Mammary epithelial cell (primary cell): ENCODE measurements at regions of chr19 and their contacts with region 1.

Region 1: DNA sequence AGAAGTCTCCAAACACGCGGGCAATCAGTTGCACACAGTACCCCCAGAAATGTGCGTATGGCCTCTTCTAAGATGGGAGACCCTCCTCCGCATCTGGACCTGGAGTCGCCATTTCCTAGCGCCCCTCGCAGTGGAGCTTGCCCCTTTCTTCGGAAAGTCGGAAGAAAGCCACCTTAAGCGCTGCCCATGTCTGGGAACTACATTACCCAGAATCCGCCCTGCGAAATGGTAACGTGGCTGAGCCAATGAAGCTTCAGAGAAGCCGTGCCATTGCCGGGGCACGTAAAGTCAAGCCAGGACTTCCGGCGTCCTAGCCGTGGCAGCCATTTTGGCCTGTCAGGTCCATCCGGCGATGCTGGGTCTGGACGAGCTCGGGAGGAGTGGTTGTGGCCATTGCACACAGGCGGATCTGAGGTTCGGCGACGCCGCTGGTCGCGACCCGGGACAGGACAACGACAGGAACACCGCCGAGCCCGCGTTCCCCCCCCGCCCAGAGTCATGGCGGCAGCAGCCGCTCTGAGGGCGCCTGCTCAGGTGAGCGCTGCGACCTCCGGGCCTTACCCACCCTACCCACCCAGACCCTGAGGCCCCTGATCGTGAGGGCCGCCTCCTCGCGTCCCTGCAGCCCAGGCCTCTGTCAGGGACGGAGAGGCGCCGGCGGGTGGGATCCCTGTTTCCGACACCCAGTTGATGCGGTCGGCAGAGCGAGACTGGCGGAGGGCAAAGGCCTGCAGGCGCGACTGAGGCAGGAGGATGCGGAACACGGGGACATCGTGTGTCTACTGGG is at the start of gene ZNF586:
- DNase-seq: peak; percentile 88
- H3K4me3 ChIP-seq: peak within 1 kb of the TSS; percentile 58 to 92 (median 88)
- H3K27ac ChIP-seq: no peak within 1 kb of the TSS
- H3K4me1 ChIP-seq: peaks cover 5% of the 10 kb centered on the region
- H3K27me3 ChIP-seq: no peaks in the 10 kb centered on the region
- CTCF ChIP-seq: no peak
- total RNA-seq, gene ZNF586: 12.0 to 12.7 TPM

Region 2: GRCh38 chr19:57819475-57820148 is 50.1 kb after region 1 on chr19:
- CTCF ChIA-PET with region 1: no interaction called
- dilution Hi-C with region 1: no loop called
- in situ Hi-C with region 1: no loop called
- intact Hi-C with region 1: loop called (anchors 2 kb)
- DNase-seq: peak; percentile 93
- H3K4me3 ChIP-seq: peak overlapping the region; percentile 83 to 89 (median 85)
- H3K27ac ChIP-seq: peak overlapping the region; percentile 75
- H3K4me1 ChIP-seq: peaks cover 10% of the 10 kb centered on the region
- H3K27me3 ChIP-seq: no peaks in the 10 kb centered on the region
- CTCF ChIP-seq: no peak

Region 3: GRCh38 chr19:57850553-57851017 is 81.0 kb after region 1 on chr19:
- CTCF ChIA-PET with region 1: no interaction called
- dilution Hi-C with region 1: loop called (anchors 5 kb)
- in situ Hi-C with region 1: no loop called
- intact Hi-C with region 1: no loop called
- DNase-seq: peak; percentile 78
- H3K4me3 ChIP-seq: peak overlapping the region; percentile 75 to 86 (median 77)
- H3K27ac ChIP-seq: peak overlapping the region; percentile 83
- H3K4me1 ChIP-seq: peaks cover 2% of the 10 kb centered on the region
- H3K27me3 ChIP-seq: no peaks in the 10 kb centered on the region
- CTCF ChIP-seq: no peak